Ovary (tissue), 10 donors: ENCODE measurements at regions of chr7 and their contacts with region 1.

Region 1: DNA sequence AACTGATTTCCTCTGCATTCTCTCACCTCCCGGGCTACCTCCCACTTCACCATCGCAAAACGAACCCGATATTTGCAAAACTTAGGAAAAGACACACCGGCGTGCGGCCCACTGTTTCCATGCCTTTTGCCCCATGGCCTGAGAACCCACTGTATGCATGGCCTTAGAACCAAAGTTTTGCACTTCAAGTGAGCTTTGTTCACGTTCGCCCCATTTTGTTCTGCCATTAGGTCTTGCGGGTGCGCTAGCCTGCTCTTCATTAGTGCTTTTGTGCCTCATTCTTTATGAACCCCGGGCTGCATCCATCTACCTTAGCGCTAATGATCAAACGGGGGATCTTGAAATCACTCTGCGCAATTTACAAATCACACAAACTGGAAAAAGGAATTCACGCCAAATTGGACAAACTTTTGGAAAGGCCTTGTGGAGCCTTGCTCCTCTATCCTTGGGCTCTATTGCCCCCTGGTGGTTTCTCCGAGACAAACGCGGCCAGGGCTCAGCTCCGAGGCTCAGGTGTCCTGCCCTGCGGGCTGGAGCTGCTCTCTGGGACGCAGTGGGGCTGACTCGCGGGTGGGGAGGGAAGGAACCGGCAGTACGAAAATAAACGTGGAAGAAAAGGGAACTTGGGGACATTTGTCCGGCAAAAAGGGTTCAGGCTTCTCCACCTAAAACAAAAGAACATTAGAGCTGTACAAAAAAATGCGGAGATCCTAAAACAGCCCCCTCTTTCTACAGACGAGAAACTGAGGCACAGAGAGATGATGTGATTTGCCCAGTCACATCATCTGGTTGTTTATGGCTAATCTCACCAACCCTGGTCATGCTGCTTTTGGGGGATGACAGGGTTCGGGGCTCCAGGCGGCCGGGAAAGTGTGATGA is 300.4 kb upstream of the NFE2L3 start:
- DNase-seq: peak; percentile 84 to 91 (median 89)
- H3K4me3 ChIP-seq: peak overlapping the region; percentile 21
- H3K27ac ChIP-seq: peak overlapping the region in 1 of 2 donors; percentile 68
- H3K4me1 ChIP-seq: peaks cover 20% of the 10 kb centered on the region
- H3K27me3 ChIP-seq: no peaks in the 10 kb centered on the region
- CTCF ChIP-seq: peak; percentile 72 to 87 (median 81)
- EP300 ChIP-seq: no peak
- POLR2A ChIP-seq: no peak

Region 2: GRCh38 chr7:25259587-25260243 is 591.9 kb before region 1 on chr7:
- intact Hi-C with region 1: loop called in 1 of 4 experiments (anchors 5 kb)
- DNase-seq: peak; percentile 51 to 77 (median 53)
- H3K4me3 ChIP-seq: no peak overlapping the region
- H3K27ac ChIP-seq: no peak overlapping the region
- H3K4me1 ChIP-seq: no peaks in the 10 kb centered on the region
- H3K27me3 ChIP-seq: no peaks in the 10 kb centered on the region
- CTCF ChIP-seq: peak; percentile 70 to 80 (median 71)
- EP300 ChIP-seq: no peak
- POLR2A ChIP-seq: no peak

Region 3: GRCh38 chr7:25559581-25560367 is 291.8 kb before region 1 on chr7:
- intact Hi-C with region 1: loop called in 2 of 4 experiments (anchors 2 to 5 kb)
- DNase-seq: no peak
- H3K4me3 ChIP-seq: no peak overlapping the region
- H3K27ac ChIP-seq: no peak overlapping the region
- H3K4me1 ChIP-seq: peaks cover 5% of the 10 kb centered on the region
- H3K27me3 ChIP-seq: no peaks in the 10 kb centered on the region
- CTCF ChIP-seq: no peak
- EP300 ChIP-seq: no peak
- POLR2A ChIP-seq: no peak

Region 4: DNA sequence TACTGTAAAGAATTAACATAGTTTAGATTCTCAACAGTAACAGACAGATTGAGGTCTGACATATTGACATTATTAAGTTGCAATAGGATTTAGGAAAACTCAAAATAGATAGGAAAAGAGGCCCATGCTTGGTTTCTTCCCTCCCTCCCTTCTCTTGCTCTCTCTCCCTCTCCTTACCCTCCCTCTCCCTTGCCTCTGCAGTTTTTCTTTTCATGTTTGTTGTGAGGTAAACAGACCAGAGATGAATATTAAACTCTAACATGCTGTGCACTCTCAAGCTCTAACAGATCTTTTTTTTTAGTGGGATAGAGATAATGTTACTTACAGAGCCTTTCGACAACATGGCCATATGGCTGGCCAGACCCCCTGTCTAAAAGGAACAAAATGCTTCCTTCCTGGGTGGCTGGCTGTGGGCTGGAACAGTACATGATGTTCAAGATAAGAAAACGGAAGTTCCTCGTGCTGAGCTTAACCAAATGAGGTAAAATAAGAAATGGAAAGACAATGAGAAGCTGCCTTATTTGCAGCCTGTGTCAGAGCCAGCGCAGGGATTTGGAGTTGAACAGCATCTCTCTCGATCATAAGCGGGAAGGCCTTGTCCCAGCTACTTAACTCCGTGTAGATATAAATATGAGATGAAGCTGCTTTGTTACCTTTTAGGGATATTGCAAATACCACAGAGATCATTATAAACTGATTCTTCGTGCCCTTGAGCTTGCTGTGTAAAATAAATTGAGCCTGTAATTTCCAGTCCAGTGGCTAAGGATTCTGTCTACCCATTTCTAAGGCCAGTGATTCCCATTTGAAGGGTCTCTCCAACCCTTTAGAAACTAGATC is 231.4 kb before region 1 on chr7:
- intact Hi-C with region 1: loop called in 1 of 4 experiments (anchors 5 kb)
- DNase-seq: peak in 2 of 5 donors; percentile 24 to 56
- H3K4me3 ChIP-seq: no peak overlapping the region
- H3K27ac ChIP-seq: peak overlapping the region in 1 of 2 donors; percentile 0
- H3K4me1 ChIP-seq: peaks cover 3% of the 10 kb centered on the region
- H3K27me3 ChIP-seq: no peaks in the 10 kb centered on the region
- CTCF ChIP-seq: no peak
- EP300 ChIP-seq: no peak
- POLR2A ChIP-seq: no peak

Region 5: DNA sequence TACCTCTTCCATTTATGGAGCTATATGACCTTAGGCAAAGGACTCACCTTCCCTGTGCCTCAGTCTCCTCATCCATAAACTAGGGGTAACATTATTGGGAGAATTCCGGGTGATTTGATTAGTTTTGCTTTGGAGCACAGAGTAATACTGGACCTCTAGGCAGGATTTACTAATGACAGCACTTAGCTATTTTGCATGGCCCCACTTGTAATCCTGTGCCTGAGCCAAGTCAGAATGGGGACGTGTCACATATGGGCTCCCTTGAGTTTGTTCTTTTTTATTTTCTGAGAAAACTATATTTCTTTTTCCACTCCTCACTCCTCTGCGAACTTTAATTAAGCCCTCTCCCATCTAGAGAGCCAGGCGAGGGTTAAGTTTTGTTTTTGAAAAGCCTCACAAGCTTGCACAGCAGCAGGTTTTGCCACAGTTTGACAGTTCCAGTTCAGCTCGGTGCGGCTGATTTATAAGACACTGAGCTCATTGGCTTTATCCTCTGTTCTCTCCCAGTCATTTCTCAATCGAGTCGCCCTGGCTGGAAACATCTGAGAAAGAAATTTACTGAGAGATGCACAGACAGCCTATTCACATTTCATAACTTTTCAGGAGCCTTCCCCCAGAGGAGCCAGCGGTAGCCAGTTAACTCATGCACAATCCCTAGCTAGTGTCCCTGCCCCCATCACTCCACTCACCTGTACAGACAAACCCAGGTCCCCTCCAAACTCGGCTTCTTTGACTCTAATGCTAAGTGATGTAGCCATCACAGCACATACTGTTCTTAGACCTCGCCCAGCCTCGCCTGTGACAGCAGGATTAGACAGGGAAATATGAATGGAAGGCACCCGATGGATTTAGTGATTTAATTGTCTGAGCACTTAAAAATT is 181.4 kb before region 1 on chr7:
- intact Hi-C with region 1: loop called in 2 of 4 experiments (anchors 2 to 10 kb)
- DNase-seq: peak in 2 of 5 donors; percentile 38 to 62
- H3K4me3 ChIP-seq: no peak overlapping the region
- H3K27ac ChIP-seq: no peak overlapping the region
- H3K4me1 ChIP-seq: peaks cover 11% of the 10 kb centered on the region
- H3K27me3 ChIP-seq: no peaks in the 10 kb centered on the region
- CTCF ChIP-seq: no peak
- EP300 ChIP-seq: no peak
- POLR2A ChIP-seq: no peak

Region 6: DNA sequence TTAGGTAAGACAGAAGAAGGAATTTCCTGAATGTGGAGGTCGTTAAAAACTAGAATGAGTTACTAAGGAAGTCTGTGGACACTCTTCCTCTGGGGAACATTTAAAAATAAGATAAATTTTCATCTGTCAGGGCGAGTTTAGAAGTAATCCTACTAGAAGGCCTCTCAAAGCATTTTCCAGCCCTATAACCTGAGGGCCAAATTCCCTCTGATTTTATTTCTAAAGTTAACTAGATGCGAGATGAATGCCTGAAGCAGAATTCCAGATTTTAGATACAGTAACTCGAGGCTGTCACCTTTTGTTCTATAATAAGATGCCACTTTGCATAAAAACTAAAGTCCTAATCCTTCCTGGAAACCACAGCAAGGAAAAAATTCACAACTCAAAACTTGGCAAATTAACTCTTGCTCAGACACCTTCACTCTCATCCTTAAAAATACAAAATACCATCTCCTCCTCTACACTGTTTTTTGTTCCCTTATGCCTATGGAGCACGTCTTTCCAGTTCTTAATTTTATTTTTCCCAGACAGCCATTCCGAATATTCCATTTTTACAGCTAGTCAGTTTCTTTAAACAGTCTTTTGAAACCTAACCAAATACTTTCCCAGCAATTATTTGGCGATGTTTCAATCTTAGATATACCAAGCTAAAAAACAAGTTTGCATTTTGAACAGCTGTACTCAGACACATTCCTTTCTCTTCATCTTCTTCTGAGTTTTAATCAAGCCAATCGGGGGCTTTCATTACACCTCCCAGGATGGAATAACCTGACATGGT is 120.3 kb before region 1 on chr7:
- intact Hi-C with region 1: loop called in 2 of 4 experiments (anchors 10 kb)
- DNase-seq: no peak
- H3K4me3 ChIP-seq: no peak overlapping the region
- H3K27ac ChIP-seq: peak overlapping the region in 1 of 2 donors; percentile 59
- H3K4me1 ChIP-seq: peaks cover 8% of the 10 kb centered on the region
- H3K27me3 ChIP-seq: no peaks in the 10 kb centered on the region
- CTCF ChIP-seq: no peak
- EP300 ChIP-seq: no peak
- POLR2A ChIP-seq: no peak

Region 7: DNA sequence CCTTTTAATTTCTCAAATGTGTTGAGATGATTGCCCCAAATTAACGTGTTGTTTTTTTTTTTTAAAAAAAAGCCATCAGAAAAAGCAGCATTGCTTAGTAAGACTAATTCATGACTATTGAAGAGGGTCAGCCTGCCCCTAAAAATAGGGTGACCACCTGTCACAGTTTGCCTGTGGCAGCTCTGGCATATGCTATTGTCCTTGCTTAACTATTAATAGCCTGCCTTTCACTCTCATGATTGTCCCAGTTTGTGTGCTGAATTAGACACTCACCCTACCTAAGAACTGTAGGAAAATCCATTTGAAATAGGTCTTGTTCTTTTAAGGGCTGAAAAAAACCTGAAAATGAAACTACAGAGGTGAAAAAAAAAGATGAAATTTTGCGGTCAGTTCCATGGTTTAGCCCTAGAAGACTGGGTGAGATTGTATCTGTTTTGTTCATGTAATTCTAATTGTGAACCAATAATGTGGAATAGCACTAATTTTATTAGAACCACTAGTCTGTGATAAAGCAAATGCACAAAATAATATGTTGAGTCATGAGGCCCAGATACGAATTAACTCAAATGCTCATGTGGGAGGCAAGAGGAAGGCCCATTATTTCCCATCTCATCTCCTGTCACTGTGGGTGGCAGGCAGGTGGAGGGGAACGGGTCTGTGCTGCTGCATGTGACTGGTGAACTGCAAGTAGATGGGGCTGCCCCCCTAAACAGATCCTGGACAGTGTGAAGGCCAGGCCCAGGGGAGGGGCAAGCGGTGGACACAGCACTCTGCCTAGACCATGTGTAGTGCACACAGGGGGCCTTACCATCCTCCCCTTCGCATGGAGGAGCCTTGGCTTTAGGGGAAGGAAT is 35.0 kb after region 1 on chr7:
- intact Hi-C with region 1: no loop called
- DNase-seq: no peak
- H3K4me3 ChIP-seq: no peak overlapping the region
- H3K27ac ChIP-seq: no peak overlapping the region
- H3K4me1 ChIP-seq: no peaks in the 10 kb centered on the region
- H3K27me3 ChIP-seq: no peaks in the 10 kb centered on the region
- CTCF ChIP-seq: no peak
- EP300 ChIP-seq: no peak
- POLR2A ChIP-seq: no peak